ENCODE measurements at regions of chr20 and their contacts with region 1.

Region 1: DNA sequence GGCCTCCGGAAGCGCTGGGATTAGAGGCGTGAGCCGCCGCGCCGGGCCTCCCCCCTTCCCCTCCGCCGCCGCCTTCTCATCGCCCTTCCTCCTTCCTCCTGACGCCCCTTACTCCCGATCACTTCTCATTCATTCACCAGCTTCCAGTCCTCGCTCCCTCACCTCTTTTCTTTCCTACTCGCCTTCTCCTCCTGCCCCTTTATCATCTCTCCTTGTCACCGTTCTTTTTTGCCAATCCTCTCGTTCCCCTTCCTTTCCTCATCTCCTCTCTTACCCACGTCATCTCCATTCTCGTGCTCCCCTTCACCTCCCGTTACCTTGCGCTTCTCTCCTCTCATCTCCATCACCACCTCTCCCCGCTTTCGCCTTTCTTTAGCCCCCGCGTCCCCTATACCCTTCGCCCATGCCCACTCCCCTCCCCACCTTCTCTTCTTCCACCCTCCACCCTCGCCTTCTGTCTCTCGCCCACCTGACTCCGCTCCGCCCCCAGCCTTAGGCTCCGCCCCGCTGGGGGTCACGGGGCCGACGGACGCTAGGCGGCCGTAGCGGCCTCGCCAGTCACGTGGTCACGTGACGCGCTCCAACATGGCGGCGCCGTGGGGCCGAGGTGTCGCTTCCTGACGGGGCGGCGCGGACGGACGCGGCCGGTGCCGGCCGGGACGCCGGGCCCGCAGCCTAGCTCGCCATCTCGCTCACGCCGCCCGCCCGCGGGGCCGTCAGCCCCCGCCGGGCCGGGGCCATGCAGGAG is at the start of gene ARFGEF2:
- DNase-seq: peak; percentile 73 to 95
- H3K4me3 ChIP-seq: peak within 1 kb of the TSS; percentile 91 to 99
- H3K27ac ChIP-seq: peak within 1 kb of the TSS; percentile 89 to 96
- H3K4me1 ChIP-seq: peaks cover 12 to 28% of the 10 kb centered on the region in 2 donors
- H3K27me3 ChIP-seq: no peaks in the 10 kb centered on the region
- CTCF ChIP-seq: peak in 2 of 3 experiments; percentile 13 to 36
- total RNA-seq, gene ARFGEF2: 7.9 TPM

Region 2: DNA sequence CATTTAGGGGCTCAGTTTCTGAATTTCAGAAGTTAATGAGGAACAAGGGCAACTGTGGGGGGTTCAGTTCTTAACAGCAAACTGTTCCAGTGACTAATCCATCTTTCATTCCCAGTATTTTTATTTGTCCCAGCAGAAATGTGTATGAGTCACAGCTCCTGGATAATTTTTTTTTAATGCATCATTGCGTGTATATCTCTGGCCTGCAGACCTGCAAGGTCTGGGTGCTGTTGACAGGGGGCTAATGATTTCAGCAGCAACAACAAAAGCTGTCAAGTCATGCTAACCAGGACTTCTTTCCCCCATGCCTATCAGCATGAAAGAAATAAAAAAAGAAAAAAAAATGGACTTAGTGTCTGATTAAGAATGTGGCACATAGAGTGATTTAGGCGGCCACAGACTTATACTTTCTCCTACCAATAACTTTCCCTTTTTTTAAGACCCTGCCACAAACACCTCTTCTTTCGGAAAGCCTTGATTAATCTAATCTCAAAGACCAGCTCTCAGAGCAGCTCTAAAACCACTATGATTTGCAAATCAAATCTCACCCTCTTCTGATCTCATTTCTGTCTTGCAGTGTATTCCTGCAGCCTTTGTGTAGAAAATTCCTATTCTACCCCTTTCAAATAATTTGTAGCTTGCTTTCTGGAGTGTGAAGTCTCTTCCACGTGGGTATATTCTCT is 79.3 kb before region 1 on chr20:
- intact Hi-C with region 1: no loop called
- DNase-seq: no peak
- H3K4me3 ChIP-seq: no peak overlapping the region
- H3K27ac ChIP-seq: no peak overlapping the region
- H3K4me1 ChIP-seq: no peaks in the 10 kb centered on the region
- H3K27me3 ChIP-seq: no peaks in the 10 kb centered on the region
- CTCF ChIP-seq: no peak

Region 3: GRCh38 chr20:49046087-49046900 is 125.0 kb after region 1 on chr20 and contains the start of gene CSE1L:
- intact Hi-C with region 1: loop called (anchors 5 kb)
- DNase-seq: peak; percentile 87 to 96
- H3K4me3 ChIP-seq: peak within 1 kb of the TSS; percentile 91 to 98
- H3K27ac ChIP-seq: peak within 1 kb of the TSS; percentile 88 to 95
- H3K4me1 ChIP-seq: peaks cover 6 to 15% of the 10 kb centered on the region in 2 donors
- H3K27me3 ChIP-seq: no peaks in the 10 kb centered on the region
- CTCF ChIP-seq: peak in 1 of 3 experiments; percentile 27
- total RNA-seq, gene CSE1L: 13.6 TPM